ENCODE measurements at regions of chr10 and their contacts with region 1.

Region 1: DNA sequence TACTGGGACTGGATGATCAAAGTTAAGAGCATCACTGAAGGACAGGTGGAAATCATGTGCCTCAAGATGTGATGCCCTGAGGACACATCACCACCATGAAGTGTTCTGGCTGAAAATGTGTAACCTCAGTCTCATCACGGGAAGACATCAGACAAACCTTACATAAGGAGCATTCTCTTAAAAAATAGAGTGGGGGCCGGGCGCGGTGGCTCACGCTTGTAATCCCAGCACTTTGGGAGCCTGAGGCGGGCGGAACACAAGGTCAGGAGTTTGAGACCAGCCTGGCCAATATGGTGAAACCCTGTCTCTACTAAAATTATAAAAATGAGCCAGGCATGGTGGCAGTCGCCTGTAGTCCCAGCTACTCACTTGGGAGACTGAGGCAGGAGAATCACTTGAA is 65.6 kb downstream of the LOXL4 start:
- DNase-seq: no peak
- ATAC-seq: no peak
- H3K4me3 ChIP-seq: no peak overlapping the region
- H3K27ac ChIP-seq: no peak overlapping the region
- H3K4me1 ChIP-seq: peaks cover 0 to 14% (median 5%) of the 10 kb centered on the region in 9 donors
- H3K27me3 ChIP-seq: no peaks in the 10 kb centered on the region
- CTCF ChIP-seq: no peak

Region 2: DNA sequence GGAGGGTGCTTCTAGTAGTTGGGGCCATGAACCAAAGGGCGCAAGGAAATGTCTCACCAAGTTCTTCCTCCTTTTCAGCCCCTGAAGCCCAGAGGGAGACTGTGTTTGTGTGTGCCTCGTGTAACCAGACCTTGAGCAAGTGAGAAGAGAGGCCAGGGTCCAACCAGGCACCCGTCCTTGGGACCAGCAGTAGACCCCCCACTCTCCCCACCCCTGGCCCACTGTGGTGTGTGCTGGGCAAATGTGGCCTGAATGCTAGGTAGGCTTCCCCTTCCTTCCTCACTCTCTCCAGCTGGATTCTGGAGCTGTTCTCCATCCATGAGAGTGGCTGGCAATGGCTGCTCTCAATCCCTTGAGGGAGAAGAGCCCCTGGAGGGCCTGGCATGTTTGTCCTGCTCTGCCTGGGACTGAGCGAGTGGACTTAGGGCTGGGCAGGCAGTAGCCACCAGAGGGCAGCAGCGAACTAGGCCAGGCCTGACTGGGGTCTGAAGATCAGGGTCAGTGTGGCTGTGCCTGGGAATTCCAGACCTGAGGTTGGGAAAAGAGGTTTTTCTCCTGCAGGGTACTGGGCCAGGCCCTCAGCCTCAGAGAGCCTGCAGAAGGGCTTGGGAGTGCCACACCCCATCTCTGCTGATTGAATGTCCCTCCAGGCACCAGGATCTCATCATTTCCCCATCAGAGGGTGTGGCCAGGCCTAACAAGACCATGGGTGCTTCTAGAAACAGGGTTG is 443.1 kb before region 1 on chr10:
- intact Hi-C with region 1: loop called in 1 of 10 experiments (anchors 5 kb)
- DNase-seq: peak; percentile 53 to 65
- ATAC-seq: peak; percentile 75 to 93 (median 78)
- H3K4me3 ChIP-seq: no peak overlapping the region
- H3K27ac ChIP-seq: no peak overlapping the region
- H3K4me1 ChIP-seq: peaks cover 0 to 12% (median 0%) of the 10 kb centered on the region in 9 donors
- H3K27me3 ChIP-seq: no peaks in the 10 kb centered on the region
- CTCF ChIP-seq: peak; percentile 73 to 91 (median 88)

Region 3: GRCh38 chr10:98134431-98135221 is 67.8 kb before region 1 on chr10 and contains the start of gene R3HCC1L:
- intact Hi-C with region 1: no loop called
- DNase-seq: peak; percentile 89 to 94
- ATAC-seq: peak; percentile 98 to 99 (median 99)
- H3K4me3 ChIP-seq: peak within 1 kb of the TSS; percentile 77 to 99 (median 86)
- H3K27ac ChIP-seq: peak within 1 kb of the TSS; percentile 79 to 99 (median 90)
- H3K4me1 ChIP-seq: peaks cover 0 to 42% (median 21%) of the 10 kb centered on the region in 9 donors
- H3K27me3 ChIP-seq: no peaks in the 10 kb centered on the region
- CTCF ChIP-seq: peak in 2 of 9 donors; percentile 21 to 24
- total RNA-seq, gene R3HCC1L: 4.1 to 6.9 (median 5.2) TPM

Region 4: DNA sequence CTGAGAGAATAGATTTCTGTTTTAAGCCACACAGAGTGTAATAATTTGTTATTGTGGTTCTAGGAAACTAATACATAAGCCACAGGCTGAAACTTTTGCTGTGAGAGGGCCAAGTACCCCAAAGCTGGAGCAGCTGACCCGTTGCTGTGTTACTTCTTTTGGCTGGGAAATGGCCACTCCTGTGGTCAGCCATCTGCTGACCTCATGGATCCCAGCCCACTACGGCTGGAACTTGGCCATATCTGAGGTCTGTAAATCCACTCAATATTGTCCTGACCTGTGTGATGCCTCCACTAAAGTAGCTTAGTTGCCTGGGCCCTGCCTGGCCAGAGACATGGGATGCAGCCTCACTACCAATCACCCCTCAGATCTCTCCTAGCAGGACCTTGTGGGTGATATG is 83.0 kb after region 1 on chr10:
- intact Hi-C with region 1: no loop called
- DNase-seq: no peak
- ATAC-seq: peak in 2 of 8 donors; percentile 46 to 55
- H3K4me3 ChIP-seq: no peak overlapping the region
- H3K27ac ChIP-seq: no peak overlapping the region
- H3K4me1 ChIP-seq: peaks cover 0 to 5% (median 0%) of the 10 kb centered on the region in 9 donors
- H3K27me3 ChIP-seq: peaks cover 0 to 14% (median 0%) of the 10 kb centered on the region in 7 donors
- CTCF ChIP-seq: no peak